PC-9 (cell line): ENCODE measurements at regions of chr3 and their contacts with region 1.

Region 1: GRCh38 chr3:148847351-148847750 is 17.7 kb upstream of the CPA3 start:
- DNase-seq: no peak
- H3K4me3 ChIP-seq: no peak overlapping the region
- H3K27ac ChIP-seq: no peak overlapping the region
- H3K4me1 ChIP-seq: no peaks in the 10 kb centered on the region
- H3K27me3 ChIP-seq: no peaks in the 10 kb centered on the region
- CTCF ChIP-seq: no peak

Region 2: GRCh38 chr3:148681080-148681479 is 166.3 kb before region 1 on chr3:
- CTCF ChIA-PET with region 1: no interaction called
- POLR2A ChIA-PET with region 1: no interaction called
- intact Hi-C with region 1: no loop called
- DNase-seq: peak in 1 of 2 experiments; percentile 52
- H3K4me3 ChIP-seq: no peak overlapping the region
- H3K27ac ChIP-seq: no peak overlapping the region
- H3K4me1 ChIP-seq: peaks cover 9% of the 10 kb centered on the region; the same call in 1 of the 2 replicates
- H3K27me3 ChIP-seq: no peaks in the 10 kb centered on the region
- CTCF ChIP-seq: no peak

Region 3: DNA sequence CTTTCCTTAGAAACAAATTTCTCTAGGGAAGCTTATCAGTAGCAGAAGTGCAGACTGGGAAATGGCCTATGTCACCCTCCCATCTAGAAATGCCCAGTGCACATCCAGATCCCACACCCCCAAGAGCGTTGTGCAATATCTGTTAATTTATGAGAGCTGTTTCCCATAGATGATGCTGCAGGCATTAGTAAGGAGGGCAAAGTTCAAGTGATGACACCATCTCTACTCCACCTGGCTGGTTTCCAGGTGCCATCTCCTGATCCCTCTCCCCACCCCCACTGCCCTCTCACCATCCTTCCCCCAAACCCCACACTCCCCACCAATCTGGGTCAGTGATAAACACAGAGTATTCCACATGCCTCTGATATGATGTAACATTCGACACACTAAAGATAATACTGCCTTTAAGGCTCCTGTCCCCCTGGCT is 110.2 kb before region 1 on chr3:
- CTCF ChIA-PET with region 1: no interaction called
- POLR2A ChIA-PET with region 1: no interaction called
- intact Hi-C with region 1: no loop called
- DNase-seq: no peak
- H3K4me3 ChIP-seq: no peak overlapping the region
- H3K27ac ChIP-seq: no peak overlapping the region
- H3K4me1 ChIP-seq: no peaks in the 10 kb centered on the region
- H3K27me3 ChIP-seq: no peaks in the 10 kb centered on the region
- CTCF ChIP-seq: no peak

Region 4: DNA sequence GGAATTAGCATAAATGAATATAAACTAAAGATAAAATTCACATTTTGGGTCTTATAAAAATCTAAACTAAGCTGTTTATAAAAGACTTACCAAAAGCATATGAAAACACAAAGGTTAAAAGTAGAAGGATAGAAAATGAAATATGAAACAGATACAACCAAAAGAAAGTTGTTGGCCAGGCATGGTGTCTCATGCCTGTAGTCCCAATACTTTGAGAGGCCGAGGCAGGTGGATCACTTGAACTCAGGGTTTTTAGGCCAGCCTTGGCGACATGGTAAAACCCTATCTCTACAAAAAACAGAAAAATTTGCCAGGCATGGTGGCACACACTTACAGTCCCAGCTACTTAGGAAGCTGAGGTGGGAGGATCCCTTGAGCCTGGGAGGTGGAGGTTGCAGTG is 68.8 kb after region 1 on chr3:
- CTCF ChIA-PET with region 1: no interaction called
- POLR2A ChIA-PET with region 1: interaction called, 15 read pairs
- intact Hi-C with region 1: no loop called
- DNase-seq: no peak
- H3K4me3 ChIP-seq: no peak overlapping the region
- H3K27ac ChIP-seq: no peak overlapping the region
- H3K4me1 ChIP-seq: no peaks in the 10 kb centered on the region
- H3K27me3 ChIP-seq: no peaks in the 10 kb centered on the region
- CTCF ChIP-seq: no peak